ENCODE measurements at regions of chr2 and their contacts with region 1.

Region 1: GRCh38 chr2:46776687-46777327 is 138.8 kb downstream of the MCFD2 start:
- DNase-seq: peak; percentile 62
- ATAC-seq: no peak

Region 2: DNA sequence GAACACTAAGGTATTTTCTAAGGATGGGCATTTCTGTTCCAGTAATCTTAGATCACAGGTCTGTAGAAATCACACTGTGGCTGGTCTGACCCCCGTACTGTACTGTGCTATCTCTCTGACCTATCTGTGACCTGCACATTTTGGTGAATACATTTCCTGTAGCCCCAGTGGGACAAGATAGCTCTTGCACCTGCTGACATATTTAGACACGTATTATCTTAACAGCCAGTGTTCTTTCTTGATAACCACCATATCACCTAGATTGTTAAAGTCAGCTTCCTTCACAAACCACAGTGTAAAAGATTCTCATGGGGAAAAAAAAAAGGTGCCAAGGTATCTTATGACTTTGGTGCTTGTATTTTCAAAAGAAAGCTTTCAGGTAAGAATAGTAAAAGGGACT is 337.2 kb before region 1 on chr2:
- intact Hi-C with region 1: no loop called
- DNase-seq: no peak
- ATAC-seq: peak; percentile 34 to 44

Region 3: GRCh38 chr2:46650556-46651001 is 126.2 kb before region 1 on chr2:
- intact Hi-C with region 1: loop called (anchors 5 to 10 kb)
- DNase-seq: peak; percentile 61
- ATAC-seq: peak; percentile 46 to 60

Region 4: DNA sequence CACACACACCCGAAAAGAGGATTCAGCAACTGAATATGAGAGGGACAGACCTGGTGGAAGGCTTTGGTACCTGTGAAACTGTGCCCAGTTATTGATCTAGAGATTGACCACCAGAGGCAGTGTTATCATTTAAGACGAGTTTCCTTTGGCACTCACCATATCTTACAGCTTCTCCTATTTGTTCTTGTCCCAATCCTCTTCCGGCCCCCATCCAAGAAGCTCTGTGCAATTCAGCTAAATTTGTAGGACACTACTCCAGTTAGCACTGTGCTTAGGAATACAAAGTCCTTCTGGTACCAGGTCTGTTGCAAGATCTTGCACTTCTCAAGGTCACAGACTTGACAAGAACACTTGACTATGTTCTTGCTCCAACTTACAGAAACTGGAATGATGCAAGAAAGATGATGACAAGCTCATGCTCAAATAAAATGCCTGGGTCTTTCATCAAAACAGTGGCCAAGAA is 119.7 kb before region 1 on chr2:
- intact Hi-C with region 1: loop called (anchors 5 to 10 kb)
- DNase-seq: peak; percentile 41
- ATAC-seq: peak; percentile 10 to 80